CD14-positive monocyte (primary cell): ENCODE measurements at regions of chr2 and their contacts with region 1.

Region 1: DNA sequence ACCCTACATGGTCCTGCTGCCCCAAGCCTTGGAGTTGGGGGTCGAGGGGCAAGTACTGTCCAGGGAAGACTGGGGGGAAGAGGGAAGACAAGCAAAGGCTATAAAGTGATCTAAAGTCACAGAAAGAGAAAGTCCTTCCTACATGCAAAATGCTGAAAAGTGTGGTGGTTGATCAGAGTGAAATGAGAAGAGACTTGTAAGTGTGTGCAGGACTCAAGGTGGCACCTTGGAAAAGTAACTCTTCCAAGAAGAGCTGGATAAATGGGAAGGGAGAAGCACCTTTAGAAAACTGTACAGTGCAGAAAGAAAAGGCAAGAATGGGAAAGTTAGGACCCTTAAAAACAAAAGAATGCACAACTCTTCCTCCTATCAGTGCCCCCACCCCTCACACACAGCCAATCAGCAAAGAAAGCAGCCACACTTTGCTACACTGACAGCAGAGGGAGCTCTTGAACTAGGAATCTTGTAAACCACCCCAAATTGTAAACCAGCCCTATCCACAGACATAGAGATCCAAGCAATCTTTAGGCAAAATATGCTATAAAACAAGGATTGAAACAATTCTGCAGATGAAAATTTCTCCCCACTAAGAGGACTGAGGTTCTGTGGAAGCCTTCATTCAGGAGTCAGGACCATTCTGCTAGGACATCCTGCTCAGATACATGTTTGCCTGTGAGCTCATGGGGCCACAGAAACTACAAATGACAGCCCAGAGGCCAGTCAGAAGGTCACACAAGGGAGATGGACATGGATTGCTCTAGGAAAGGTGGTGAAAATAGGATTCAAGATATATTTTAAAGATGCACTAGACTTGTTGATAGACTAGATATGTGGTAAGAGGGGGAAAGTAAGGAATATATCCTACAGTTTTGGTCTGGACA is 146.4 kb downstream of the FTCDNL1 start:
- DNase-seq: peak; percentile 46 to 69 (median 58)
- H3K4me3 ChIP-seq: no peak overlapping the region
- H3K4me3 Mint-ChIP-seq: no peak overlapping the region
- H3K27ac ChIP-seq: no peak overlapping the region
- H3K27ac Mint-ChIP-seq: peak overlapping the region in 1 of 7 donors; percentile 64
- H3K4me1 ChIP-seq: peaks cover 0 to 2% of the 10 kb centered on the region in 2 donors
- H3K4me1 Mint-ChIP-seq: peaks cover 7% of the 10 kb centered on the region
- H3K27me3 ChIP-seq: no peaks in the 10 kb centered on the region
- H3K27me3 Mint-ChIP-seq: peaks cover 0 to 2% (median 0%) of the 10 kb centered on the region in 3 donors
- CTCF ChIP-seq: peak; percentile 83

Region 2: DNA sequence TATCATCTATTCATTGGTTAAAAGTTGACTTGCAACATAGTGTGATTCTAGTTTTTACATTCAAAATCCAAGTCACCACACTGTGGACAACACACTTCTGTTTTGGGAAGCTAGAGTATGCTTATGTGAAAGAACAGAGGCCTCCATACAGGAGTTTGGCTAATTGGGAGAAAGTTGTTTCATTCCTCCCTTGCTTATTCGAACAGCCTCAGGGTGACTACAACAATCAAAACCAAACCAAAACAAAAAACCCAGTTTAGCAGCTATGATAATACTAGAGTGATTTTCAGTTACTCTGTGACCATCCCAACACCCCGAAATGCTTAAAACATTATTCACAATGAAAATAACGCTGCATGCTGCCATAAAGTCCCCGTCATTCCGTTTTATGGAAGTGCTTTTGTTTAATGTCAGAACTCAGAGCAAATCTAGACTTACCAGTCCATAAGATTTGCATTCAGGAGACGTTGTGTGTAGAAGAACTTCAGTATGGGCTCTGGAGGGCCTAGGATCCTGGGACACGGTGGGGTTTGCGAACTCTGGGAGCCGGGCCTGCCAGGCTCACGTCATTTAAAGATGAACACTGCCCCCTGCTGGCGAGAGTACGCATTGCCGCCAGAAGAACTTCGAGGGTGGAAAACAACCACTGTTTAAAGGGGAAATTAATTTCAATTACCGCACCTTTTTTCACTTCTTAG is 35.0 kb after region 1 on chr2:
- intact Hi-C with region 1: loop called (anchors 5 kb)
- DNase-seq: peak; percentile 45 to 68 (median 61)
- H3K4me3 ChIP-seq: peak overlapping the region; percentile 29 to 69 (median 61)
- H3K4me3 Mint-ChIP-seq: peak overlapping the region; percentile 76 to 86
- H3K27ac ChIP-seq: peak overlapping the region; percentile 45 to 70
- H3K27ac Mint-ChIP-seq: peak overlapping the region; percentile 84 to 96 (median 92)
- H3K4me1 ChIP-seq: peaks cover 24 to 27% of the 10 kb centered on the region in 2 donors
- H3K4me1 Mint-ChIP-seq: peaks cover 25% of the 10 kb centered on the region
- H3K27me3 ChIP-seq: no peaks in the 10 kb centered on the region
- H3K27me3 Mint-ChIP-seq: peaks cover 0 to 1% (median 0%) of the 10 kb centered on the region in 3 donors
- CTCF ChIP-seq: peak; percentile 99

Region 3: DNA sequence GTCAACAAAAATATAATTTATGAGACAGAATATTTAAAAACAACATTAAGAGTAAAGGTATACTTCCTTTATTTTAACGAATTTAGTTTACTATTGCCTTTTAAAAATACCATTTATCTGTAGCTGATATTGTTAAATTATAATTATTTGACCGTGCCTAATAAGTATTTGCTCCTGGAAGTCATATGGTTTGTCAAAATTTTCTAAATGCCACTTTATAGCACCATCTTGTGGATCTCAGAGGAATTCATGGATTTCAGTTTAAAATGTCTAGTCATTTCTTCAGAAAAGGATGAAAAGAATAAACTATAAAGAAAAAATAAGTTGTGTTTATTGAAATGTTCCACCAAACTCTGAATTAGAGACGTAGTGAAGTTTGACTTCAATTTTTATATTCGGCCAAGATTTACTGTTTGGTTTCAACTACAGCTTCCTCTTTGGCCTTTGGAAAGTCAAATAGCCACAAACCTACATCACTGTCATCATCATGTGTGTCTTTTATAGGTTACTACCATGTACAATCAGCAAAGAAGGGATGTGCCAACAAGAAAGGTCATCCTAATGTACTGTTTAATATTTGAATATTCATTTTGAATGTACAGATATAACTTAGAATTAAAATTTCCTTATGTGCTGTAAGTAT is 156.7 kb after region 1 on chr2:
- intact Hi-C with region 1: loop called in 1 of 2 experiments (anchors 5 kb)
- DNase-seq: peak; percentile 14 to 27 (median 22)
- H3K4me3 ChIP-seq: peak overlapping the region in 1 of 3 experiments; percentile 38
- H3K4me3 Mint-ChIP-seq: peak overlapping the region in 1 of 2 donors; percentile 35
- H3K27ac ChIP-seq: no peak overlapping the region
- H3K27ac Mint-ChIP-seq: peak overlapping the region in 2 of 7 donors; percentile 35 to 40
- H3K4me1 ChIP-seq: peaks cover 0 to 7% of the 10 kb centered on the region in 2 donors
- H3K4me1 Mint-ChIP-seq: peaks cover 6% of the 10 kb centered on the region
- H3K27me3 ChIP-seq: no peaks in the 10 kb centered on the region
- H3K27me3 Mint-ChIP-seq: peaks cover 0 to 2% (median 1%) of the 10 kb centered on the region in 3 donors
- CTCF ChIP-seq: peak; percentile 71